Posterior vena cava (tissue), 2 donors: ENCODE measurements at regions of chr3 and their contacts with region 1.

Region 1: GRCh38 chr3:52001443-52001974 is 5.8 kb upstream of the RPL29 start:
- DNase-seq: peak; percentile 88

Region 2: GRCh38 chr3:51941798-51942602 is 59.5 kb before region 1 on chr3 and contains the starts of genes PARP3 and RRP9:
- intact Hi-C with region 1: no loop called
- DNase-seq: peak; percentile 100
- total RNA-seq, gene PARP3: 16.5 to 22.3 TPM
- total RNA-seq, gene RRP9: 13.4 to 14.9 TPM

Region 3: GRCh38 chr3:52056968-52057805 is 55.7 kb after region 1 on chr3:
- intact Hi-C with region 1: loop called (anchors 2 to 5 kb)
- DNase-seq: peak; percentile 100

Region 4: GRCh38 chr3:52123106-52123725 is 121.7 kb after region 1 on chr3:
- intact Hi-C with region 1: loop called (anchors 2 to 5 kb)
- DNase-seq: peak; percentile 93

Region 5: GRCh38 chr3:52144034-52144795 is 142.7 kb after region 1 on chr3:
- intact Hi-C with region 1: loop called (anchors 2 kb)
- DNase-seq: peak; percentile 95

Region 6: DNA sequence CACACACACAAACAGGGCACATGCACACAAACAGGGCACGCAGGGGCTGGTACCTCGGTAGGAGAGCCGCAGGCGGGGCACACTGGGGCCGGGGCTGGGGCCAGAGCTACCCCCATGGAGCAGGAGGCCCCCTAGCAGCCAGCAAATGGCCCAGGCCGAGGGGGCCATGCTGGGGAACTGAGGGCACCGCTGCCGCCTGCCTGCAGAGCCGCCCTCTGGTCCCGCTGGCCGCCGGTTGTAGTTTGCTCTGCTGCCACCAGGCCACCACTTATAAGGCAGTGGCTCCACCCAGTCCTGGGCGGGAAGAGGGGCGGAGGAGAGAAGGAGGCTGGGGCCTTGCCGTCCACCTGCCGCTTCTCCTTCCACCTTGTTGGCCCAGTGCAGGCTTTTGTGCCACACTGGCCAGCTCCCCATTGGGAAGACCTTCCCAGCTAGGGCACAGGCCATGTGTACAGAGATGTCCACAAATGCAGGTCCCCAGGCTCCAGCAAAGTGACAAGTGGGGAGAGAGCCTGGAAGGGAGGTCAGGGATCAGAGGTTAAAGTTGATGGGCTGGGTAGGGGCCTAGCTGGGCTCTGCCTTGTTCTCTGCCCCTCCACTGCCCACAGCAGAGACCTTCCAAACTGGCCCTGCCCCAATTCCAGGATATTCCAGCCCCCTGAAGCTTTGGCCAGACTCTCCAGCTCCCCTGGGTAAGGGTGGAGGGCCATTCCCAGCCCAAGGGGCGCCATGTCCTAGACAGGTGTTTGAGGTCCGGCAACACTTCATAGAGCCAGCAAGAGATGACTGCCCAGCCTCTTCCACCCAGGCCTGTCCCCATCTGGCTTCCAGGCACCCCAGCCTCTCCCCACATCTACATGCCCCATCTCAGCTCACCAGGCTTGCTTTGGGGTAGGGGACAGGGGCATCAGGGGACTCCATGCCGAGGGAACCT is 443.6 kb after region 1 on chr3 and contains the start of gene SEMA3G:
- intact Hi-C with region 1: loop called in 1 of 2 experiments (anchors 10 kb)
- DNase-seq: peak; percentile 90
- total RNA-seq, gene SEMA3G: 12.4 to 17.7 TPM